ENCODE measurements at regions of chr5 and their contacts with region 1.

Region 1: DNA sequence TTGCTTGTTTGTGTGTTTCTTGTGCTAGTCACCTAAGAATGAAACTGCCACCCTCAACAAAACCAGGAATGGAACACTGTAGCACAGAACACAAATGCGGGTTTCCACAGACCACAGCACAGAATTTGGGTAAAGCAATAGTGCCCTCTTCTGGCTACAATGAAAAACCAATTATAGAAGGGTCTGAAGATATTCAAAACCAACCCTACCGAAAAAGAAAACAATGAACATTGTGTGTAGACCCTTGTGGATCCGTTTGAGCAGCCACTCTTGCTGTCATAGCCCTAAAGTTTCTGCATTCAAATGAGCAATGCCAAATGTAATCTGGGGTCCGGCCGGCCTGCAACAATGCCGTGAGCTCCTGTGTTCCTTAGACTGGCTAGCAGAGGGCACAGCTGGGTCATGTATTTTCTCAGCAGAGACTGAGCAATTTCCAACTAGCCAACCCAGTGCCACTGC is 8.3 kb upstream of the ENC1 start:
- DNase-seq: peak; percentile 18
- H3K4me3 Mint-ChIP-seq: no peak overlapping the region
- H3K27ac Mint-ChIP-seq: no peak overlapping the region
- H3K4me1 Mint-ChIP-seq: no peaks in the 10 kb centered on the region
- H3K27me3 Mint-ChIP-seq: peaks cover 3% of the 10 kb centered on the region

Region 2: GRCh38 chr5:73902327-73903051 is 746.4 kb before region 1 on chr5:
- CTCF ChIA-PET with region 1: interaction called, 19 read pairs
- intact Hi-C with region 1: loop called (anchors 1 kb)
- DNase-seq: peak; percentile 9
- H3K4me3 Mint-ChIP-seq: no peak overlapping the region
- H3K27ac Mint-ChIP-seq: no peak overlapping the region
- H3K4me1 Mint-ChIP-seq: peaks cover 3% of the 10 kb centered on the region
- H3K27me3 Mint-ChIP-seq: peaks cover 23% of the 10 kb centered on the region

Region 3: GRCh38 chr5:73917433-73917832 is 731.4 kb before region 1 on chr5:
- CTCF ChIA-PET with region 1: no interaction called
- intact Hi-C with region 1: no loop called
- DNase-seq: no peak
- H3K4me3 Mint-ChIP-seq: no peak overlapping the region
- H3K27ac Mint-ChIP-seq: no peak overlapping the region
- H3K4me1 Mint-ChIP-seq: peaks cover 5% of the 10 kb centered on the region
- H3K27me3 Mint-ChIP-seq: peaks cover 4% of the 10 kb centered on the region

Region 4: DNA sequence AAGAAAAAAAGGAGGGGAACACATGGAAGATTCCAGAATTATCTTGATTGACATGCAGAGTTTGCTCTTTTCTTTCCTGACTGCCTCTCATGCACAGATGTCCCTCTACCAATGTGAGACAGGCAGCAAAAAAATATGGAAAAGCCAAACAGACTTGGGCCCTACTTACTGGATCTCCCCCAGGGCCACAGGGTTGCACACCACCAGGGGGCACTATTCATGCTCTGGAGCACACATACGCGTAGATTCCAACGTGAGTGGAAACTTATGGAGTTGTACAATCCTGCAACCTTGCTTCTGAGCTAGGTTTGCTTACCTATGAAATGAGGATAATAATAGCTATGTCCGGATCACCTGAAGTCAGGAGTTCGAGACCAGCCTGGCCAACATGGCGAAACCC is 703.4 kb before region 1 on chr5:
- CTCF ChIA-PET with region 1: no interaction called
- intact Hi-C with region 1: loop called (anchors 2 kb)
- DNase-seq: peak; percentile 37
- H3K4me3 Mint-ChIP-seq: no peak overlapping the region
- H3K27ac Mint-ChIP-seq: no peak overlapping the region
- H3K4me1 Mint-ChIP-seq: no peaks in the 10 kb centered on the region
- H3K27me3 Mint-ChIP-seq: peaks cover 10% of the 10 kb centered on the region

Region 5: GRCh38 chr5:74056789-74057164 is 592.1 kb before region 1 on chr5:
- CTCF ChIA-PET with region 1: no interaction called
- intact Hi-C with region 1: loop called (anchors 5 kb)
- DNase-seq: peak; percentile 5
- H3K4me3 Mint-ChIP-seq: no peak overlapping the region
- H3K27ac Mint-ChIP-seq: no peak overlapping the region
- H3K4me1 Mint-ChIP-seq: no peaks in the 10 kb centered on the region
- H3K27me3 Mint-ChIP-seq: peaks cover 6% of the 10 kb centered on the region

Region 6: DNA sequence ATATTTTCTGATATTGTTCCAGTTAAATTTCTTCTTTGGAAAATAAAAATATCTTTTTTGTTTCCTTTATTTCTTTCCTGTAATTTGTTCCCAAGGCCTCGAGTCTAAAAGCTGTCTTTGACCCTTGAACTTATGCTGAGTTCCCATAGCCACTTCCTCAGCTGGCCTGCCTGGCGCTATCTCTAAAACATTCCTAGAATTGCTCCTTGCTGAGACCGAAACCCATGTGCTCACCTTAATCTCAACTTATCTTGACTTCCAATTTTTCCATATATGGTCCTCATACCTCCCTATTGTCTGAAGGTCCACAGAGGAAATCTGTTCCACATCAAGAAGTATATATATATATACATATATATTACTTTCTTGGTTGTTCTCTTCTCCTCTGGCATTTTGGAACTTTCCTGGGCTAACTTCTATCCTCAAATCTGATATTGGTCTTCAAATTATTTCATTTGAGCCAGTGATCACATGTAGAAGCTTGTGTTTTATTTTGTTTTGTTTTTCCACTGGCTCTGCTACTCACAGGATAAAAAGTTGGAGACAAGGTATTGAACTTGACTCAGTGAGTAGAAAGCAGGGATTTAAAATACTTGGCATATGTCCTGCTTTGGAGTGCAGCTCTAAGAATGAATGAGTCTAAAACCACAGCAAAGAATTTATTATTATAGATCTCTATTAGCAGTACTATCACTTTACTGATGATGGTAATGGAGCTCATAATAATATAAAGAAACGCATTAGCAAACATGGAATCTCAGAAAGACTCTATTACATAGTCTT is 53.5 kb before region 1 on chr5:
- CTCF ChIA-PET with region 1: no interaction called
- intact Hi-C with region 1: no loop called
- DNase-seq: no peak
- H3K4me3 Mint-ChIP-seq: no peak overlapping the region
- H3K27ac Mint-ChIP-seq: no peak overlapping the region
- H3K4me1 Mint-ChIP-seq: no peaks in the 10 kb centered on the region
- H3K27me3 Mint-ChIP-seq: peaks cover 20% of the 10 kb centered on the region